Activated CD4-positive, alpha-beta memory T cell treated with anti-CD3 and anti-CD28 coated beads for 36 hours (primary cell): ENCODE measurements at regions of chr16 and their contacts with region 1.

Region 1: GRCh38 chr16:79269211-79269863 is 331.2 kb downstream of the MAF start:
- DNase-seq: peak; percentile 89
- H3K4me3 Mint-ChIP-seq: peak overlapping the region; percentile 60
- H3K27ac Mint-ChIP-seq: peak overlapping the region; percentile 98
- H3K4me1 Mint-ChIP-seq: peaks cover 91% of the 10 kb centered on the region
- H3K27me3 Mint-ChIP-seq: peaks cover 5% of the 10 kb centered on the region

Region 2: DNA sequence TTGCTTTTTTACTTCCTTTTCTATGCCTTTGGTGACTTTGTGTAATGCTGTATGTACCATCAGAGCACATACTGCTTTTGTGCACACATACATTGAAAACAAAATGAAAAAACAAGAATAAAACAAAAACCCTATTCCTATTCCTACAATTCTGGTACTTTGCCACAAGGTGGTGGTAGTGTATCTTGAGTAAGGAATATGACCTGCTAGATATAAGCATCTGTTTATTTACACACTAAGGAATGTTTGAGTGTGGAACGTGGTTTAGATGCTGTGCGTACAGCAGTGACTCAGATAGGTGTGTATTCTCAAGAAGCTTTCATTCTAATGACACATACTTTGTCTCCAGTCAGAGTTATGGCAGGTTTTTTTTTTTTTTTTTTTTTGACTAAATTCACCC is 563.6 kb before region 1 on chr16:
- CTCF ChIA-PET with region 1: no interaction called
- POLR2A ChIA-PET with region 1: interaction called, 3 read pairs
- intact Hi-C with region 1: loop called (anchors 5 kb)
- DNase-seq: peak; percentile 51
- H3K4me3 Mint-ChIP-seq: no peak overlapping the region
- H3K27ac Mint-ChIP-seq: peak overlapping the region; percentile 87
- H3K4me1 Mint-ChIP-seq: peaks cover 16% of the 10 kb centered on the region
- H3K27me3 Mint-ChIP-seq: no peaks in the 10 kb centered on the region

Region 3: GRCh38 chr16:78892951-78893733 is 376.2 kb before region 1 on chr16:
- CTCF ChIA-PET with region 1: no interaction called
- POLR2A ChIA-PET with region 1: interaction called, 3 read pairs
- intact Hi-C with region 1: loop called (anchors 1 kb)
- DNase-seq: peak; percentile 65
- H3K4me3 Mint-ChIP-seq: peak overlapping the region; percentile 20
- H3K27ac Mint-ChIP-seq: peak overlapping the region; percentile 96
- H3K4me1 Mint-ChIP-seq: peaks cover 86% of the 10 kb centered on the region
- H3K27me3 Mint-ChIP-seq: no peaks in the 10 kb centered on the region

Region 4: GRCh38 chr16:79008036-79008868 is 261.1 kb before region 1 on chr16:
- CTCF ChIA-PET with region 1: no interaction called
- POLR2A ChIA-PET with region 1: interaction called, 4 read pairs
- intact Hi-C with region 1: loop called (anchors 1 kb)
- DNase-seq: peak; percentile 60
- H3K4me3 Mint-ChIP-seq: no peak overlapping the region
- H3K27ac Mint-ChIP-seq: peak overlapping the region; percentile 90
- H3K4me1 Mint-ChIP-seq: peaks cover 45% of the 10 kb centered on the region
- H3K27me3 Mint-ChIP-seq: no peaks in the 10 kb centered on the region

Region 5: GRCh38 chr16:79158337-79158736 is 111.0 kb before region 1 on chr16:
- CTCF ChIA-PET with region 1: interaction called, 4 read pairs
- POLR2A ChIA-PET with region 1: no interaction called
- intact Hi-C with region 1: loop called (anchors 5 kb)
- DNase-seq: no peak
- H3K4me3 Mint-ChIP-seq: no peak overlapping the region
- H3K27ac Mint-ChIP-seq: no peak overlapping the region
- H3K4me1 Mint-ChIP-seq: peaks cover 35% of the 10 kb centered on the region
- H3K27me3 Mint-ChIP-seq: no peaks in the 10 kb centered on the region

Region 6: GRCh38 chr16:79372503-79373184 is 103.3 kb after region 1 on chr16:
- CTCF ChIA-PET with region 1: no interaction called
- POLR2A ChIA-PET with region 1: interaction called, 4 read pairs
- intact Hi-C with region 1: loop called (anchors 5 kb)
- DNase-seq: peak; percentile 67
- H3K4me3 Mint-ChIP-seq: no peak overlapping the region
- H3K27ac Mint-ChIP-seq: peak overlapping the region; percentile 75
- H3K4me1 Mint-ChIP-seq: peaks cover 21% of the 10 kb centered on the region
- H3K27me3 Mint-ChIP-seq: no peaks in the 10 kb centered on the region